Posterior vena cava (tissue), 2 donors: ENCODE measurements at regions of chr11 and their contacts with region 1.

Region 1: DNA sequence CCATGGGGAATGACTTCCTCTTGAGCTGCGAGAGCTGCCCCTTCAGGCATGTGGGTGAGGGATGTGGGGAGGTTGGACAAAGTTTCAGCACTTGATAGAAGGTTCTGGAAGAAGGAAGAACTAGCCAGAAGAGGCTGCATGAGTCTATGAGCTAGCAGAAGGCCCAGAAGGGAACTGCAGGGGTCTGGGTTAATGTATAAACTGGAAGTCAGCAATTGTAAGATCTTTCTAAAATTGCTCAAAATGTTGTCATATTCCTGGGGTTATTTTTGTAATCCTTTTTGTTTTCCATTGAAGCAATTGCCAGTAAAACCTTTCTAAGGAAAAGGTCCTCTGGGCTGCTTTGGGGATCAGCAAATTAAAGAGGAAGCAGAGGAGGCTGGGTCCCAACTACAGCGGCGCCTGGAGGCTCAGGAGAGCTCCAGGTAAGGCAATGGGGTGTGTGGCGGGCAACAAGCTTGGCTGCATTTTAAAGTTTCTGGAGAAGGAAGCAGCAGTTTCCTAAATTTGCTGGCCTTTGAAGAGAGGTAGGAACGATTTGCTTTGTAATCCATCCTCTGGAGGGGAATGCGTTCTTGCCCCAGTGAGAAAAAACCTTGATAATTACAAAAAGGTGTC is 29.2 kb downstream of the ADAMTS15 start:
- DNase-seq: no peak

Region 2: GRCh38 chr11:130124096-130124495 is 353.6 kb before region 1 on chr11:
- intact Hi-C with region 1: no loop called
- DNase-seq: peak; percentile 94

Region 3: DNA sequence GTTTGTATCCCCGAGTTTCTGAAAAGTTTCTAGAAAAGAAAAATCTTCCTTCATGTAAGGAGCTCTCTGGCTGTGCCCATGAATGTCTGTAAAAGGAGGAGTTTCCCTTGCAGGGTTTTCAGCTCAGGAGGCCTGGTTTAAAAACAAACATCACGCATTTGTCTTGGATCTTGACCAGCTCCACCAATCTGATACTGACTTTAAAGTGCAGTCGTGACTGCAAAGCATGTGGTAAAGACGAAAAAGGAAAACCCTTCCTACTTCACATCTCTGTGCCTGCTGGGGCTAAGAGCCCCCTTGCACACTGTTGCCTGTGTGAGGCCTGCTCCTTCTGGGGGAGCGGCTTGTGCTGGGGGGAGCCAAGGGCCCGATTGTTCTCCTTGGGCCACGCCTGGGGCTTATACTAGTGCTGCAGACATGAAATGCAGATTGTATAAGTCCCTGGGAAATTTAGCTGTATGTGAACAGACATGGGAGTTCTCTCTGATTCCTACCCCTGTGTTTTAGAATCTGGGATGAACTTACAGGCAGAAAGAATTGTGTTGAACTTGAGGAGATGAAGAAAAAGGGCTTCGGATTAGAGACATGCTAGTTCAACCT is 32.8 kb after region 1 on chr11:
- intact Hi-C with region 1: loop called in 1 of 2 experiments (anchors 1 kb)
- DNase-seq: no peak